ENCODE measurements at regions of chr13 and their contacts with region 1.

Region 1: DNA sequence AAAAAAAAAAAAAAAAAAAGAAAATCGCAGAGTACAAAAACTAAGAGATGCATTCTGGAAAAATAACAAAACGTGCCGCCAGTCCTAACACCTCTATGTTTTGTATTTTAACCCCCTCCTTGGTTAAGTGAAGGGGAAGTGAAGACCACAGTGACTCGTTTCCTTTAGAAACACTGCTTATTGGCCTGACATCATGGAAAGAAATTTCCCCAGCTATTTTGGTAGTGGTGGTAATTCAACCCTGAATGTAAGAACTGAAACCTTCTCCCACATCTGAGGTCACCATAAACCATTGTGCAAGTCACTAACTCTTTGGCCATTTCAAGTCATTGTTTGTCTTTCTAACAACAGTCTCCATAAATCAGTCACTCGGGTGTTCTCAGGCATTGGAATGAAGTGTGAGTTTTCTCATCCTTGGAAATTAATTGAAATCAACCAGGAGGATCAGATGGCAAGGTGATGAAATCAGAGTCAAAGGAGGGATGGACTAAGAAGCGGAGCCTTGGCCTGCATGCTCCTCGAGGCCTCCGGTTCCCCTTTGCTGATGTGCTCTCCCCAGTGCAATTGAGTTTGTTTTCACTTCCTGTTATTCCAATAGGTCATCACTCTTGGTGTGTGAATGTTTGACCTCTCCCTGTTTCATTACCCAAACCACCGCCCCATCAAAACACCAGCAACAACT is 443.9 kb downstream of the FGF9 start:
- DNase-seq: peak in 1 of 2 donors; percentile 62
- ATAC-seq: peak; percentile 30
- H3K4me3 ChIP-seq: no peak overlapping the region
- H3K27ac ChIP-seq: no peak overlapping the region
- H3K4me1 ChIP-seq: peaks cover 3 to 4% of the 10 kb centered on the region in 2 donors
- H3K27me3 ChIP-seq: no peaks in the 10 kb centered on the region

Region 2: DNA sequence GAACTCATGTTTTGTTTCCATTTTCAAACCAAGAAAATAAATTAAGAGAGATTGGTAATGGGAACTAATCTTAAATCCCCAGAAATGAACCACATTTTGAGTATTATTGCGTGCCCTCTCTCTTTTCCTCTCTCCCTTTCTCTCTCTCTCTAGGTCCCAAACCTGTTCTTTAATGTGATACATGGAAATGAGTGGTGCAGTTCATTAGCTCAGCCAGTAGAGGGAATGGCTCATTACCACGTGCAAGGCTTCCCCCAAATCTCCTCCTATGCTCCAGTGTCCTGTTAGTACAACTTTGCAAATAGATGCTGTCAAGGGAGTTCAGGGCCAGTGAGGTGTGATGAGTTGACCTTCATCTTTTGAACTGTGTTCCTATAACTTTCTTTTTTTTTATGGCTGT is 265.4 kb before region 1 on chr13:
- intact Hi-C with region 1: loop called in 1 of 2 experiments (anchors 5 kb)
- DNase-seq: no peak
- ATAC-seq: peak; percentile 85
- H3K4me3 ChIP-seq: no peak overlapping the region
- H3K27ac ChIP-seq: no peak overlapping the region
- H3K4me1 ChIP-seq: no peaks in the 10 kb centered on the region
- H3K27me3 ChIP-seq: no peaks in the 10 kb centered on the region

Region 3: DNA sequence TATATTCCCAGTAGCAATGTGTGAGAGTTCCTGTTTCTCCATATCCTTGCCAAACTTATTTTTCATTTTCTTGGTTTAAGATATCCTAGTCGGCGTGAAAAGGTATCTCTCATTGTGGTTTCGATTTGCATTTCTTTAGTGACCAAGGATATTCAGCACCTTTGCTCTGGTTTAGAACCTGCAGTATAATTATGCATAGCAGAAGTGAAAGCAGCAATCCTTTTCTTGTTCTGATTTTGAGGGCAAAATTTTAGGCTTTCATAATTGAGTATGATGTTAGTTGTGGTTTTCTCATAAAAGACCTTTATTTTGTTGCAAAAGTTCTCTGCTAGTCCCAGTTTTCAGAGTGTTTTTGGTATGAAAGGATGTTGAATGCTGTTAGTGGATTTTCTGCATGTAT is 47.1 kb after region 1 on chr13:
- intact Hi-C with region 1: no loop called
- DNase-seq: no peak
- ATAC-seq: no peak
- H3K4me3 ChIP-seq: no peak overlapping the region
- H3K27ac ChIP-seq: no peak overlapping the region
- H3K4me1 ChIP-seq: no peaks in the 10 kb centered on the region
- H3K27me3 ChIP-seq: no peaks in the 10 kb centered on the region